ENCODE measurements at regions of chr16 and their contacts with region 1.

Region 1: GRCh38 chr16:83374979-83375378 is 432.8 kb upstream of the HSBP1 start:
- DNase-seq: no peak
- ATAC-seq: peak in 3 of 8 donors; percentile 52 to 86 (median 77)
- H3K4me3 ChIP-seq: no peak overlapping the region
- H3K27ac ChIP-seq: no peak overlapping the region
- H3K4me1 ChIP-seq: peaks cover 0 to 13% (median 0%) of the 10 kb centered on the region in 9 donors
- H3K27me3 ChIP-seq: no peaks in the 10 kb centered on the region
- CTCF ChIP-seq: no peak

Region 2: GRCh38 chr16:83258366-83258928 is 116.5 kb before region 1 on chr16:
- intact Hi-C with region 1: no loop called
- DNase-seq: no peak
- ATAC-seq: peak in 3 of 8 donors; percentile 79 to 86 (median 82)
- H3K4me3 ChIP-seq: no peak overlapping the region
- H3K27ac ChIP-seq: no peak overlapping the region
- H3K4me1 ChIP-seq: peaks cover 0 to 9% (median 0%) of the 10 kb centered on the region in 9 donors
- H3K27me3 ChIP-seq: no peaks in the 10 kb centered on the region
- CTCF ChIP-seq: no peak

Region 3: GRCh38 chr16:83433201-83433600 is 58.2 kb after region 1 on chr16:
- intact Hi-C with region 1: loop called in 1 of 10 experiments (anchors 10 kb)
- DNase-seq: no peak
- ATAC-seq: no peak
- H3K4me3 ChIP-seq: no peak overlapping the region
- H3K27ac ChIP-seq: no peak overlapping the region
- H3K4me1 ChIP-seq: no peaks in the 10 kb centered on the region
- H3K27me3 ChIP-seq: no peaks in the 10 kb centered on the region
- CTCF ChIP-seq: no peak

Measured in heart right ventricle (tissue), 16 donors.